IMR-90 (cell line): ENCODE measurements at regions of chr5 and their contacts with region 1.

Region 1: GRCh38 chr5:82641331-82642003 is 363.3 kb upstream of the RPS23 start:
- DNase-seq: peak; percentile 81
- ATAC-seq: peak; percentile 79
- H3K4me3 ChIP-seq: no peak overlapping the region
- H3K27ac ChIP-seq: no peak overlapping the region
- H3K4me1 ChIP-seq: no peaks in the 10 kb centered on the region
- H3K27me3 ChIP-seq: no peaks in the 10 kb centered on the region
- CTCF ChIP-seq: peak; percentile 79
- POLR2A ChIP-seq: no peak
- RAD21 ChIP-seq: peak; percentile 72

Region 2: DNA sequence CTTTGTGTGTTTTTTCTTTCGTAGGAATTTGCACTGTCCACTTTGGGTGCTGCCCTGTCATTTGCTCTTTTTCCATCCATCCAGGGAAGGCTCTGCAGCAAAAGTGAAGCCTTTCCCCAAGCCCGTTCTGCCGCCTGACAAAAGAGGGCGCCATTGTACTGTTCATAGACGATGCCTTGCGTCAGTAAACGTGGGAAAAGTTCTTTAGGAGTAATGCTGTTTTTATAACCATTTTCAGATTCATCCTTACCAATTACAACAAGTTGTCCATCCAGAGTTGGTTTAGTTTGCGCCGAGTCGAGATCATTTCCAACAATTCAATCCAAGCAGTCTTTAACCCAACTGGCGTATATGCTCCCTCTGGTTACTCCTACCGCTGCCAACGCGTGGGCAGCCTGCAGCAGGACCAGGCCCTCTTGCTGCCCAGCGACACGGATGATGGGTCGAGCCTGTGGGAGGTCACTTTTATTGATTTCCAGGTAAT is 329.1 kb before region 1 on chr5:
- CTCF ChIA-PET with region 1: no interaction called
- POLR2A ChIA-PET with region 1: no interaction called
- dilution Hi-C with region 1: no loop called
- in situ Hi-C with region 1: no loop called
- intact Hi-C with region 1: loop called (anchors 5 kb)
- DNase-seq: peak; percentile 83
- ATAC-seq: peak; percentile 85
- H3K4me3 ChIP-seq: no peak overlapping the region
- H3K27ac ChIP-seq: no peak overlapping the region
- H3K4me1 ChIP-seq: peaks cover 6% of the 10 kb centered on the region; the same call in 1 of the 2 replicates
- H3K27me3 ChIP-seq: no peaks in the 10 kb centered on the region
- CTCF ChIP-seq: peak; percentile 98
- POLR2A ChIP-seq: peak; percentile 26; the same call in 1 of the 2 replicates
- RAD21 ChIP-seq: peak; percentile 98

Region 3: GRCh38 chr5:82364497-82364896 is 277.0 kb before region 1 on chr5:
- CTCF ChIA-PET with region 1: interaction called, 4 read pairs
- POLR2A ChIA-PET with region 1: no interaction called
- dilution Hi-C with region 1: no loop called
- in situ Hi-C with region 1: loop called (anchors 10 kb)
- intact Hi-C with region 1: no loop called
- DNase-seq: peak; percentile 71
- ATAC-seq: peak; percentile 83
- H3K4me3 ChIP-seq: no peak overlapping the region
- H3K27ac ChIP-seq: no peak overlapping the region
- H3K4me1 ChIP-seq: no peaks in the 10 kb centered on the region
- H3K27me3 ChIP-seq: no peaks in the 10 kb centered on the region
- CTCF ChIP-seq: peak; percentile 70
- POLR2A ChIP-seq: no peak; the same call in 1 of the 2 replicates
- RAD21 ChIP-seq: peak; percentile 77

Region 4: DNA sequence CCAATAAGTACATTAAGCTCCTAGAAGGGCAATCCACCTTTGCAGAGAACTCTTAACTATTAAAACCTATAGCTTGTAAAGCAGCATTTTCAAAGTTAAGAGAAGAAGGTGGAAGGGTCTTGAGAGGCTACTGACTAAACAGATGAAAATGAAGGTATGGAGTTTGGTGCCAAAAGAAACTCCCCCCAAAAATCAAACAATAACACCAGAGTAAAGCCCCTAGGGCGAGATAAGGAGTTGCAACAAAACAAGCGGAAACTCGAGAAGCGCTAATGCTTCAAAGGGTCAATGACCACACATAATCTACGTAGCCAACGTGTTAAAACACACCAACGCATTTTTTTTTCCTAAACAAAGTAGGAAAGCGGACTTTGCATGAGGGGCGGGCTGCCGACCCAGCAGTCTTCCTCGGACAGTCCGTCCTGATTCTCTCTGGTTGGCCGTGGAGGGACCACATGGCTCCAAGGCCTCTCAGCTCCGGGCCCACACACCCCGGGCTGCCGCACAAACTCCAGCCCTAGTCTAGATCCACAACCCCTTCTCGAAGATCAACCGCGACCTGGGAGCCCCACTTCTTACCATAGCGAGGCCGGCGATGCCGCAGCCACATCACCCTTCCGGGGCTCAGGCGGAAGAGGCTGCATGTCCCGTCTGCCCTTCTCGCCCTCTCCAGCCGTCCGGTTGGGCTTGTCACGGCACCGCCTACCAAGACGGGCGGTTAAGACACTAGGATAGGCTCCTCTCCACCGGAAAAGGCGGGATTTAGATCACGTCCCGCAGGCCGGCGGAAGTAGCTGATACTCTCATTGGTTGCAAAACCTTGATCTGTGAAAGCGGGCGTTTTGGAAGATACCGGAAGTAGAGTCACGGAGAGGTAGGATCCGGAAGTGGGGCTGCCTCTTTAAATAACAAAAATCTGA is 435.5 kb after region 1 on chr5 and contains the starts of genes TMEM167A and XRCC4:
- CTCF ChIA-PET with region 1: no interaction called
- POLR2A ChIA-PET with region 1: no interaction called
- dilution Hi-C with region 1: no loop called
- in situ Hi-C with region 1: no loop called
- intact Hi-C with region 1: loop called (anchors 5 kb)
- DNase-seq: peak; percentile 99
- ATAC-seq: peak; percentile 100
- H3K4me3 ChIP-seq: peak within 1 kb of the TSS; percentile 79
- H3K27ac ChIP-seq: peak within 1 kb of the TSS; percentile 88
- H3K4me1 ChIP-seq: peaks cover 3% of the 10 kb centered on the region; the same call in 1 of the 2 replicates
- H3K27me3 ChIP-seq: no peaks in the 10 kb centered on the region
- CTCF ChIP-seq: no peak
- POLR2A ChIP-seq: peak; percentile 95
- RAD21 ChIP-seq: no peak
- total RNA-seq, gene TMEM167A: 34.6 and 95.8 TPM in 2 replicates
- total RNA-seq, gene XRCC4: 4.7 and 11.7 TPM in 2 replicates

Region 5: DNA sequence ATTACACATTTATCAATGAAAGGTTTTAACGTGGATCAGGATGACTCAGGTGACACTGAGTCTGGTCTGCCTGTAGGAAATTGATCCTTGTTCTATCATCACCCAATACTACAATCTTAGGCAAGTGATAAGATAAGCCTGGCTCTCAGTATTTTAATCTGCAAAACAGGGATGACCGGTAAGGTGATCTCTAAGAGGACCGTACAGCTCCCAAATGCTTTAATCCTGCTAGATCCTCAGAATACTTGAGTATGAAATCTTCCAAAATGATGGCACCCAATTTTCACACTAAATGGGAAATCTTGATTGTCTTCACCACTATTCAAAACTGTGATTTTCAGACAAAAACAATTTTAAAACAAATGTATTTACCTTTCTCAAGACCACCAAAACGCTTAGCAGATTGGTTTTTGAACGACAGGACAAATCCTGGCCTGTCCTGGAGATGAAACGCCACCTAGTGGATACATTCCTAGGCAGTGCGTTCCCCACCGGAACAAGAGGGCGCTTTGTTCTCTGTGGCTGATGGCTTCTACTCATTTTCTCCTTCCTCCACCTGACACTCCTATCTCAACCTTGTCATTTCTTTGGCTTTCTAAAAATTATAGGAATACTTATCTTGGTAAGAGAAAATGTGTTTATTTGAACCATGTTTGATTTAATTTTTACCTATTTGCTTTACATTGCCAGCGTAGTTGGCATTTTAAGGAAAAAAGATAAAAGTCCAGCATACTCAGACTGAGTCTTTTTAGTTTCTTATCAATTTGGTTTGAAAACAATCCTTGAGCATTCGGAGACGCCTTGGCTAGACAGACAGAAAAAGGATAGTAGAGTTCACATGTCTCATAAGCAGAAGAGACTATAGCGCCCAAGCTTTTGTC is 788.9 kb after region 1 on chr5:
- CTCF ChIA-PET with region 1: no interaction called
- POLR2A ChIA-PET with region 1: no interaction called
- dilution Hi-C with region 1: no loop called
- in situ Hi-C with region 1: loop called (anchors 25 kb)
- intact Hi-C with region 1: loop called (anchors 1 kb)
- DNase-seq: peak; percentile 69
- ATAC-seq: peak; percentile 89
- H3K4me3 ChIP-seq: no peak overlapping the region
- H3K27ac ChIP-seq: no peak overlapping the region
- H3K4me1 ChIP-seq: no peaks in the 10 kb centered on the region
- H3K27me3 ChIP-seq: no peaks in the 10 kb centered on the region
- CTCF ChIP-seq: peak; percentile 93
- POLR2A ChIP-seq: no peak
- RAD21 ChIP-seq: peak; percentile 89

Region 6: GRCh38 chr5:83553000-83553486 is 911.6 kb after region 1 on chr5:
- CTCF ChIA-PET with region 1: no interaction called
- POLR2A ChIA-PET with region 1: no interaction called
- dilution Hi-C with region 1: no loop called
- in situ Hi-C with region 1: loop called (anchors 10 kb)
- intact Hi-C with region 1: no loop called
- DNase-seq: peak; percentile 22
- ATAC-seq: no peak
- H3K4me3 ChIP-seq: no peak overlapping the region
- H3K27ac ChIP-seq: no peak overlapping the region
- H3K4me1 ChIP-seq: peaks cover 23% of the 10 kb centered on the region
- H3K27me3 ChIP-seq: no peaks in the 10 kb centered on the region
- CTCF ChIP-seq: no peak
- POLR2A ChIP-seq: no peak
- RAD21 ChIP-seq: no peak

Region 7: GRCh38 chr5:83564069-83564749 is 922.7 kb after region 1 on chr5:
- CTCF ChIA-PET with region 1: no interaction called
- POLR2A ChIA-PET with region 1: no interaction called
- dilution Hi-C with region 1: no loop called
- in situ Hi-C with region 1: loop called (anchors 10 kb)
- intact Hi-C with region 1: loop called (anchors 1 kb)
- DNase-seq: peak; percentile 63
- ATAC-seq: peak; percentile 56; the same call in 1 of the 2 replicates
- H3K4me3 ChIP-seq: no peak overlapping the region
- H3K27ac ChIP-seq: no peak overlapping the region
- H3K4me1 ChIP-seq: peaks cover 9% of the 10 kb centered on the region
- H3K27me3 ChIP-seq: no peaks in the 10 kb centered on the region
- CTCF ChIP-seq: peak; percentile 70
- POLR2A ChIP-seq: no peak
- RAD21 ChIP-seq: peak; percentile 75